Activated CD4-positive, alpha-beta T cell treated with anti-CD3 and anti-CD28 coated beads for 36 hours (primary cell): ENCODE measurements at regions of chr5 and their contacts with region 1.

Region 1: GRCh38 chr5:112160652-112161391 is 258.3 kb downstream of the EPB41L4A start:
- DNase-seq: peak; percentile 95
- ATAC-seq: peak; percentile 90
- H3K4me3 Mint-ChIP-seq: peak overlapping the region; percentile 91
- H3K27ac Mint-ChIP-seq: peak overlapping the region; percentile 92
- H3K4me1 Mint-ChIP-seq: peaks cover 44% of the 10 kb centered on the region
- H3K27me3 Mint-ChIP-seq: no peaks in the 10 kb centered on the region

Region 2: DNA sequence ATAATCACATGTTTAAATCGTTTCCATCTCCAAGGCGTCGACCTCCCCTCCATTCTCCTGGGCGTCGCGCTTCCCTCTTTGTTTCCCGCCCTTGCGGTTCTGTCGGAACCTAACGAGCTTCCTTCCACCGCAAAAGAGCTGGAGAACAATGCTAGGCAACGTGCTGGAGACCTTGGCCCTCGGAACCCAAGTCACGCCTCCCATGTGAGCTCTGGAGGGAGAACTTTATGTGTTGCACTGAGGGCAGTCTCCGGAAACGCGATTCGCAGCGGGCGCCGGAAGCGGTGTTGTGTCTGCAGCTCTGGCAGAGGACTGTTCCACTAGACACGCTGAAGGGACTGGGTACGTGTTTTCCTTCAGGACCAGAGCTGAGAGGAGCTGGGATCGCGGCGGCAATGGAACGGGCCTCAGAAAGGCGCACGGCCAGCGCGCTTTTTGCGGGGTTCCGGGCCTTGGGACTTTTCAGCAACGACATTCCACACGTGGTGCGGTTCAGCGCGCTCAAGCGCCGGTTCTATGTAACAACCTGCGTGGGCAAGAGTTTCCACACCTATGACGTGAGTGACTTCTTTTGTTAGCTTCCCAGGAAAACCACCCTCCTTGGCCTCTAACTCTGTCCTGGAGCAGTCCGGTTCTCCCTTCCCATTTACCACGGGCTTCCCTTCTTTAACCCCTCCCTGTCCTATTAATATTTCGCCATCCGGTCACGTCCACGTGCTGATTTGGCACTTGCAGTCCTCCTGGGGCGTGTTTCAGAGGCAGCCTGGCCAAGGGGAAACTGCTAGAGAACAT is 1068.6 kb before region 1 on chr5 and contains the start of gene WDR36:
- CTCF ChIA-PET with region 1: no interaction called
- POLR2A ChIA-PET with region 1: no interaction called
- intact Hi-C with region 1: loop called in 1 of 2 experiments (anchors 1 kb)
- DNase-seq: peak; percentile 93
- ATAC-seq: peak; percentile 91
- H3K4me3 Mint-ChIP-seq: peak within 1 kb of the TSS; percentile 92
- H3K27ac Mint-ChIP-seq: peak within 1 kb of the TSS; percentile 96
- H3K4me1 Mint-ChIP-seq: peaks cover 31% of the 10 kb centered on the region
- H3K27me3 Mint-ChIP-seq: peaks cover 4% of the 10 kb centered on the region
- total RNA-seq, gene WDR36: 58.6 to 61.7 TPM

Region 3: DNA sequence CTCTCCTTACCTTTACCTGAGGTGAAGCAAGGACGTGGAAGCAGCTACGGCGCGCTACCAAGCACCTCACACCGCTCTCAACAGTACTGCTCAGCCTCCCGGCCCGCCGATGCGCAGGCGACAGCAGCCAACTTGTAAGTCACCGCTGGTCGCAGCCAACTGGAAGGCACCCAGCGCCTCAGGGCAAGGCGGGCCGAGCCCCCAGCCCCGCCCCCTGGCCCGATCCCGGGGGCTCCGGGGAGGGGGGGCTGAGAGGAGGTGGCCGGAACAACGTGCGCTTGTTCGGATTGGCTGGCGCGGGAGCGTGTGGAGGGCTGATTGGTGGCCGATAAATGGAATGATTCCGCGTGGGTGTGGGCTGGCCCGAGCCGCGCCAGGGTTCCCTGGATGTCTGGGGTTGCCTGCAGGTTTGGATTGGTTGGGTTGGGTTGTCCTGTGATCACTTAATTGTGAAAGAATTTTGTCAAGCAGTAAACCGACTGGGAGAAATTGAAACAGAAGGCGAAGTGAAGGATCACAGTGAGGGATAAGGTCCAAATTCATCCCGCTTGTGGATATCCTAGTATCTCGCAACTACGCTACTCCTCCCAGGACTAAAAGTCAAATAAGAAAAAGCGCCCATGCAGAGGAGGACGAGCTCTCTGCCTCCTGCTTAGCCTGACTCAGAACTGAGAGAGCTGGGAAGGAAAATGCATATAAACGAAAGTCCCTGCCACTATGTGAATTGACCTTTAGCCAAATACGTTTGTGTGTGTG is 648.3 kb before region 1 on chr5 and contains the start of gene STARD4:
- CTCF ChIA-PET with region 1: no interaction called
- POLR2A ChIA-PET with region 1: interaction called, 3 read pairs
- intact Hi-C with region 1: loop called in 1 of 2 experiments (anchors 1 kb)
- DNase-seq: peak; percentile 97
- ATAC-seq: peak; percentile 94
- H3K4me3 Mint-ChIP-seq: peak within 1 kb of the TSS; percentile 99
- H3K27ac Mint-ChIP-seq: peak within 1 kb of the TSS; percentile 96
- H3K4me1 Mint-ChIP-seq: peaks cover 42% of the 10 kb centered on the region
- H3K27me3 Mint-ChIP-seq: no peaks in the 10 kb centered on the region
- total RNA-seq, gene STARD4: 54.2 to 55.3 TPM

Region 4: GRCh38 chr5:112217843-112218579 is 57.2 kb after region 1 on chr5:
- CTCF ChIA-PET with region 1: no interaction called
- POLR2A ChIA-PET with region 1: no interaction called
- intact Hi-C with region 1: no loop called
- DNase-seq: no peak
- ATAC-seq: no peak
- H3K4me3 Mint-ChIP-seq: no peak overlapping the region
- H3K27ac Mint-ChIP-seq: no peak overlapping the region
- H3K4me1 Mint-ChIP-seq: no peaks in the 10 kb centered on the region
- H3K27me3 Mint-ChIP-seq: peaks cover 16% of the 10 kb centered on the region

Region 5: DNA sequence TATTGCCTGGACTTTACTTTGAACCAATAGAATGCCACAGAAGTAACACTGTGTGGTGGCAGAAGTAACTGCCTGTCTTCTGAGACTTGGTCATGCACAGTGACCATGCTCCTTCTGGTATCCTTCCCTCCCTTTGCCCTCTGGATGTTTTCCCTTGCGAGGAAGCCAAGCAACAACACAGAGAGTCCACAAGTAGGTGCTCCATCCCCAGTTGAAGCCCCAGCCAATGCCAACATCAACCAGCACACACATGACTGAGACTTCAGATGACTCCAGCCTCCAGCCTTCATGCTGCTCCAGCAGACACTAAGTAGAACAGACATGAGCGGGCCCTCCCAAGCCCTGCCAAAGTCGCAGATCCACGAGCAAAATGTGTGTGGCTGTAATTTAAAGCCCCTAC is 128.6 kb after region 1 on chr5:
- CTCF ChIA-PET with region 1: no interaction called
- POLR2A ChIA-PET with region 1: no interaction called
- intact Hi-C with region 1: no loop called
- DNase-seq: no peak
- ATAC-seq: no peak
- H3K4me3 Mint-ChIP-seq: no peak overlapping the region
- H3K27ac Mint-ChIP-seq: no peak overlapping the region
- H3K4me1 Mint-ChIP-seq: no peaks in the 10 kb centered on the region
- H3K27me3 Mint-ChIP-seq: no peaks in the 10 kb centered on the region

Region 6: GRCh38 chr5:112312816-112313215 is 152.0 kb after region 1 on chr5:
- CTCF ChIA-PET with region 1: no interaction called
- POLR2A ChIA-PET with region 1: no interaction called
- intact Hi-C with region 1: no loop called
- DNase-seq: no peak
- ATAC-seq: no peak
- H3K4me3 Mint-ChIP-seq: no peak overlapping the region
- H3K27ac Mint-ChIP-seq: no peak overlapping the region
- H3K4me1 Mint-ChIP-seq: no peaks in the 10 kb centered on the region
- H3K27me3 Mint-ChIP-seq: peaks cover 7% of the 10 kb centered on the region

Region 7: DNA sequence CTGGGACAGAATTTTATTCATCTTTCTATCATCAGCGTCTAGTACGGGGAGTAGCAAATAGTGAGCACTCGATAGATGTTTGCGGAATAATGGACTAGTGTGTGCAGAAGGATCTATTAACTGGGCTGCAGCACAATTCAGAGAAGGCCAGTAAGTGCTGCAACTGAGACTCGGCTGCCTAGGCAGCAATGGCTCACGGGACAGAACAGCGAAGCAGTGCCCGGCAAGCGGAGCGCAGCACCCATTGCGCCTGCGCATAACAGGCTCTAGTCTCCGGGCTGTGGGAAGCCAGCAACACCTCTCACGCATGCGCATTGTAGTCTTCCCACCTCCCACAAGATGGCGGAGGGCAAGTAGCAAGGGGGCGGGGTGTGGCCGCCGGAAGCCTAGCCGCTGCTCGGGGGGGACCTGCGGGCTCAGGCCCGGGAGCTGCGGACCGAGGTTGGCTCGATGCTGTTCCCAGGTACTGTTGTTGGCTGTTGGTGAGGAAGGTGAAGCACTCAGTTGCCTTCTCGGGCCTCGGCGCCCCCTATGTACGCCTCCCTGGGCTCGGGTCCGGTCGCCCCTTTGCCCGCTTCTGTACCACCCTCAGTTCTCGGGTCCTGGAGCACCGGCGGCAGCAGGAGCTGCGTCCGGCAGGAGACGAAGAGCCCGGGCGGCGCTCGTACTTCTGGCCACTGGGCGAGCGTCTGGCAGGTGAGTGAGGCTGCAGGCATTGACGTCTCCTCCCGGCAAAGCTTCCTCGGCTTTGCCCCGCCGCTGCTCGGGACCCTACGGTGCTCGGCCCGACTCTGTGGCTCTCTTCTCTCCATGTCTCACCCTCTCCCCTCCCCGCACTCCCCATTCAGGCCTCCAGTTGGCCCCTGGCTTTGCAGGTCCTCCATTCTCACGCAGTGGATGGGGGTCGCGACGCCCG is 546.6 kb after region 1 on chr5:
- CTCF ChIA-PET with region 1: no interaction called
- POLR2A ChIA-PET with region 1: no interaction called
- intact Hi-C with region 1: loop called in 1 of 2 experiments (anchors 1 kb)
- DNase-seq: peak; percentile 98
- ATAC-seq: peak; percentile 97
- H3K4me3 Mint-ChIP-seq: peak overlapping the region; percentile 83
- H3K27ac Mint-ChIP-seq: peak overlapping the region; percentile 90
- H3K4me1 Mint-ChIP-seq: peaks cover 54% of the 10 kb centered on the region
- H3K27me3 Mint-ChIP-seq: no peaks in the 10 kb centered on the region

Region 8: GRCh38 chr5:112921833-112922817 is 761.3 kb after region 1 on chr5 and contains the start of gene REEP5:
- CTCF ChIA-PET with region 1: no interaction called
- POLR2A ChIA-PET with region 1: no interaction called
- intact Hi-C with region 1: loop called in 1 of 2 experiments (anchors 5 kb)
- DNase-seq: peak; percentile 91
- ATAC-seq: peak; percentile 81
- H3K4me3 Mint-ChIP-seq: peak within 1 kb of the TSS; percentile 84
- H3K27ac Mint-ChIP-seq: peak within 1 kb of the TSS; percentile 95
- H3K4me1 Mint-ChIP-seq: peaks cover 55% of the 10 kb centered on the region
- H3K27me3 Mint-ChIP-seq: no peaks in the 10 kb centered on the region
- total RNA-seq, gene REEP5: 44.3 to 50.4 TPM